ENCODE measurements at regions of chr1 and their contacts with region 1.

Region 1: GRCh38 chr1:165933446-165934178 is 106.2 kb downstream of the UCK2 start:
- DNase-seq: no peak
- CTCF ChIP-seq: no peak

Region 2: GRCh38 chr1:165703648-165704047 is 230.0 kb before region 1 on chr1:
- in situ Hi-C with region 1: no loop called
- DNase-seq: no peak
- CTCF ChIP-seq: no peak

Region 3: DNA sequence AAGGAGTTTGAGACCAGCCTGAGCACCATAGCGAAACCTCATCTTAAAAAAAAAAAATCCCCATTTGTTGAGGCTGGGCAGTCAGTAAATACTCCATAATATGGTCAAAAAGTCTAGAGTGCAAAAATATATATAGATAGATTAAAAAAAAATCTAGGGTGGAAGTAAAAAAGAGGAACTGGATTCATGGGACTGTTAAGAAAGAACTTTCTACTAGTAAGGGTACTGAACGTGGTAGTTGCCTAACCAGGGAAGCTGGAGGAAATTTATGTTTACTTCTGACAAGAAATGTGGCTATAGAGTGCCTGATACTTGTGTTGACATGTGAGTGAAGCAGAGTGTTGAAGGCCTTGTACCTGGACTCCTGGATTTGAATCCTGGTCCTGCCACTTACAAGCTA is 499.0 kb after region 1 on chr1:
- in situ Hi-C with region 1: loop called (anchors 10 kb)
- DNase-seq: no peak
- CTCF ChIP-seq: no peak